ENCODE measurements at regions of chr1 and their contacts with region 1.

Region 1: DNA sequence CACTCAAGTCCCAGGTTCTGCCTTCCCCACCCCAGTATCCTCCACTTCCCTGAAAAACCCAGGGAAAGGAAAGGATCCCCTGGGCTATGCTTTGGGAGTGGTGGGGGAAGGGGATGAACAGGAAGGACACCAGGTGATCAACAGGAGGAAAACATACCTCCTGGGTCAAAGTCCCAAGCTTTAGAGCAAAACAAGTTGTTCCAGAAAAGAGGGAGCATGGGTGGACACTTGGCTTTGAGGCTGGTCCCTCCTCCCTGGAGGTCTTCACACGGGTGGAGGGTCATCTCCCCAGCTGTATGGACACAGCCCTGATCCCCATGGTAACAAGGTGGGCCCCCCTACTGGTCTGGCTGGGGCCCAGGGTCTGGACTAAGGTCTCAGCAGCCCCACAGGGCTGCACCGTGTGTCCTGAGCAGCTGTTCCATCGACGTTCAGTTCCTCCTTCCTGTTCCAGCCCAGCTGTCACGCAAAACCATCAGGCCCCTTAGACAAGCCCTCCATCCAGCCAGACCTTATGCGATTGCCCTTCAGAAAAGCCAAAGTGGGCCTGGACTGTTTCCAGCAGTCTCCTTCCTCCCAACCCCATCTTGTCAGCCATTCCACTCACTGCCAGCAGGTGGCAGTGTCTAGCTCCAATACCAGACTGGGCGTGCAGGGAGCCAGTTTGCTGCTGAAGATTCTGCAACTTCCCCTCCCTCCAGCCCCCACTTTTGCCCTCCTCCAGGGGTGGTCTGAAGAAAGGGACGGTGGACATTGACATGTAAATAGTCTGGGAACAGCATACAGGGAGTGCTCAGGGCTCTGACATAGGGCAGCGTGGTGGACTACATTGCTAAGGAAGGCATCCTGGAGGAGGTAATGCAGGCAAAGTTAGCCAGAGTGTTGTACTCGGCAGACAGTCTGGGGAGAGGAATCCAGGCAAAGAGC is 2.9 kb upstream of the PDZK1IP1 start:
- DNase-seq: peak; percentile 33 to 77 (median 56)
- ATAC-seq: peak; percentile 67
- H3K4me3 ChIP-seq: no peak overlapping the region
- H3K4me3 Mint-ChIP-seq: no peak overlapping the region
- H3K27ac ChIP-seq: no peak overlapping the region
- H3K27ac Mint-ChIP-seq: no peak overlapping the region
- H3K4me1 ChIP-seq: no peaks in the 10 kb centered on the region
- H3K4me1 Mint-ChIP-seq: no peaks in the 10 kb centered on the region
- H3K27me3 ChIP-seq: peaks cover under 1 to 3% of the 10 kb centered on the region in 2 experiments
- H3K27me3 Mint-ChIP-seq: peaks cover 18% of the 10 kb centered on the region
- CTCF ChIP-seq: peak; percentile 91

Region 2: DNA sequence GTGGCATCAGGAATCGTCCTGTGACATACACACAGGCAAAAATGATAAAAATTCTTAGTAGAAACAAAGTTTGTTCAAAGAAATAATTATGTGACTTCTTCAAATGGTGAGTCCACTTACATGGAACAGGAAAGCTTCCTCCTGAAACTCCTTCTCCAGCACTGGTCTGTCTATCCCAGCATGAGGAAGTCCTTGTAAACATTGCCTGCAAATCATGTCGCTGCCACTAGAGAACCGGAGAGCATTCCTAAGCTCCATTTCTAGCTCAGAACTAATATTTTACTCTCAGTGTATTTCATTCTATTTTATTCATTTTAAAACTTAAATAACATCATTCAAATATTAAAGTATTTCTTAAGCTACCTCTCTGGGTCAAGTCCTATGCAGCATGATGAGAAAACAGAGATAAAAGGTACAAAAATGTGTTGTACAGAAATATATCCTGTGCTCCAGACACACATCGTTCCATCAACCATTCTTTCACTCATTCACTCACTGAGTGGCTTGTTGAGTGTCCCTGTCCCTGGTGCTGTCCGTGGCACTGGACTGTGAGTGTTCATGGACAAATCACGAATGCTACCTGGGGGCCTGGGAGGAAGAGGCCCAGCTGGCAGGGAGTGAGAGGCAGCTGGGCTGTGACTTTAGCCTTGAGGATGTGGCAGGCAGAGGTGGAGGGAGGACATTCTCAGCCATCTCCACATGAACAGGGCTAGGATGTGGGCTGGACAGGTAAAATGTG is 45.5 kb before region 1 on chr1:
- CTCF ChIA-PET with region 1: no interaction called
- POLR2A ChIA-PET with region 1: no interaction called
- intact Hi-C with region 1: no loop called
- DNase-seq: no peak
- ATAC-seq: no peak
- H3K4me3 ChIP-seq: no peak overlapping the region
- H3K4me3 Mint-ChIP-seq: no peak overlapping the region
- H3K27ac ChIP-seq: no peak overlapping the region
- H3K27ac Mint-ChIP-seq: no peak overlapping the region
- H3K4me1 ChIP-seq: no peaks in the 10 kb centered on the region
- H3K4me1 Mint-ChIP-seq: no peaks in the 10 kb centered on the region
- H3K27me3 ChIP-seq: peaks cover 1 to 4% of the 10 kb centered on the region in 2 experiments
- H3K27me3 Mint-ChIP-seq: peaks cover 41% of the 10 kb centered on the region
- CTCF ChIP-seq: no peak

Region 3: DNA sequence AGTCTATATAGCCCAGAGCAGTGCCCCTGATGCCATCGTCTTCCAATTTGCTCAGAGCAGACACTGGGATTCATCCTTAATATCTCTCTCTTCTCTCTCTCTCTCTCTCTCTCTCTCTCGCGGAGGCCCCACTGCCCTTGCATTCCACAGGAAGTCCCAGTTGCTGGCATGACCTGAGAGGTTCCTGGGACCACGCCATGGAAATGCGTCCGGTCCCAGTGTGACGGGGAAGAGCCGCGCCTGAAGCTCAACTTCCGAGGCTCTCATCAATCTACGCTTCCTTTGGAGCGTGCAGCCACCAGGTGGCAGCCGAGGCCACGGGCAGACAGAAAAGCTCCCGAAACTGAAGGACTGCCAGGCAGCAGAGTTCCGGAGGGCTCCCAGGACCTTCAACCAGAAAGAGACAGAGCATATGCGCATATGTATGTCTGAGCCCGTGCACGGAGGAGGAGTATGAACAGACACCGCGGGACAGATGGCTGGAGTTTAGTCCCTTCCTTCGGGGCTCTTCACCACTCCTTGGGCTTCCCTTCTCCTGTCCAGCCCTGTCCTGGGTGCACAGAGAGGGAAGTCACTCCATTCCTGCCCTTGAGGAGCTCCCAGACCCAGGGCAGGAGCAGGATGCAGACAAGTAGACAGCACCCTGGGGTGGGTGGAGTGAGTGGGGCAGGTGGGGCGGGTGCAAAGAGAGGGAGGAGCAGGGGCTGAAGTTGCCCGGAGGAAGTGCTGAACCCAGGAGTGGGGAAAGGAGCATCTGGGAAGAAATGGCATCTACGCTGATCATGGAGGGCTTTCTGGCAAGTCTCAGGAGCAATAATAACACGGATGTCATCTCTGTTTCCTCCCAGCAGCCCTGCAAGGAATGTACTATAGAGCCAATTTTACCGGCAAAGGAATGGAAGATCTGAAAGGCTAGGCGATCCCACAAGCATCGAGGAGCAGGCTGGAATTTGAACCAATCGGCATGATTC is 13.4 kb before region 1 on chr1:
- CTCF ChIA-PET with region 1: interaction called, 17 read pairs
- POLR2A ChIA-PET with region 1: no interaction called
- intact Hi-C with region 1: no loop called
- DNase-seq: peak; percentile 40 to 79 (median 58)
- ATAC-seq: peak; percentile 63
- H3K4me3 ChIP-seq: peak overlapping the region; percentile 47
- H3K4me3 Mint-ChIP-seq: peak overlapping the region; percentile 78
- H3K27ac ChIP-seq: no peak overlapping the region
- H3K27ac Mint-ChIP-seq: no peak overlapping the region
- H3K4me1 ChIP-seq: peaks cover 11% of the 10 kb centered on the region
- H3K4me1 Mint-ChIP-seq: peaks cover 15% of the 10 kb centered on the region
- H3K27me3 ChIP-seq: peaks cover 16 to 22% of the 10 kb centered on the region in 2 experiments
- H3K27me3 Mint-ChIP-seq: peaks cover 69% of the 10 kb centered on the region
- CTCF ChIP-seq: peak; percentile 73

Region 4: GRCh38 chr1:47262787-47263413 is 70.2 kb after region 1 on chr1:
- CTCF ChIA-PET with region 1: interaction called, 10 read pairs
- POLR2A ChIA-PET with region 1: interaction called, 3 read pairs
- intact Hi-C with region 1: loop called (anchors 2 to 5 kb)
- DNase-seq: peak in 10 of 14 experiments; percentile 5 to 57 (median 18)
- ATAC-seq: peak; percentile 39
- H3K4me3 ChIP-seq: no peak overlapping the region
- H3K4me3 Mint-ChIP-seq: no peak overlapping the region
- H3K27ac ChIP-seq: no peak overlapping the region
- H3K27ac Mint-ChIP-seq: no peak overlapping the region
- H3K4me1 ChIP-seq: no peaks in the 10 kb centered on the region
- H3K4me1 Mint-ChIP-seq: no peaks in the 10 kb centered on the region
- H3K27me3 ChIP-seq: no peaks in the 10 kb centered on the region
- H3K27me3 Mint-ChIP-seq: no peaks in the 10 kb centered on the region
- CTCF ChIP-seq: peak; percentile 68

Region 5: DNA sequence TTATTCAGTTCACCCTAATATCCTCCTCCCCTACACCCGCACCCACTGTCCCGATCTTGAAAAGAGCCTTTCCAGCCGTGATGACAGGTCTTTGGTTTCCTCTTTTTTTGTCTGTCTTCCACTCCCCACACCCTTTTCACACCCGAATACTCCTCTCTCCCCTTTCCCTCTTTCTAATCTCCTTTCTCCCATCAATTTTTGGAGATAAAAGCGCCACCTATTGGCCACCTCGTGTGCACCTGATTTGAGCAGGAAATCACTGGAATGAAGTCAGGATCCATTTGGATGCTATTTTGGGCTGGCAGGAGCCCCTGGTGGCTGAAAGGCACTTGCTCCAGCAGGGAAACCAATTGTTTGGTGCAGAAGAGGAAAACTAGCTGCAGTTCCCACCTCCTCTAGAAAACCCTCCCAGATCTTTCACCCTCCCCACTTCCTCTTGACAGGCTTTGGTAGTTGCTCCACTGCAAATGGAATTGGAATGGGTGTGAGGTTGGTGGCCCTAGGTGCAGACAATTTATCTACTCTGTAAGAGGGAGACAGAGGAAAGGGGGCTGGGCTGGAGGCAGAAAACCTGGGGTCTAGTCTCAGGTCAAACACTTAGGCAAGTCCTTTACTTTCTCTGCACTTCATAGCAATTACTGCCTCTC is 231.7 kb after region 1 on chr1:
- CTCF ChIA-PET with region 1: no interaction called
- POLR2A ChIA-PET with region 1: no interaction called
- intact Hi-C with region 1: loop called in 1 of 2 experiments (anchors 1 kb)
- DNase-seq: peak in 2 of 14 experiments; percentile 18 to 20
- ATAC-seq: no peak
- H3K4me3 ChIP-seq: no peak overlapping the region
- H3K4me3 Mint-ChIP-seq: no peak overlapping the region
- H3K27ac ChIP-seq: no peak overlapping the region
- H3K27ac Mint-ChIP-seq: no peak overlapping the region
- H3K4me1 ChIP-seq: no peaks in the 10 kb centered on the region
- H3K4me1 Mint-ChIP-seq: no peaks in the 10 kb centered on the region
- H3K27me3 ChIP-seq: peaks cover 0 to 12% of the 10 kb centered on the region in 2 experiments
- H3K27me3 Mint-ChIP-seq: peaks cover 69% of the 10 kb centered on the region
- CTCF ChIP-seq: peak; percentile 63

Region 6: GRCh38 chr1:47710329-47711071 is 517.8 kb after region 1 on chr1:
- CTCF ChIA-PET with region 1: interaction called, 4 read pairs
- POLR2A ChIA-PET with region 1: no interaction called
- intact Hi-C with region 1: loop called (anchors 1 to 2 kb)
- DNase-seq: peak; percentile 26 to 76 (median 56)
- ATAC-seq: peak; percentile 65
- H3K4me3 ChIP-seq: no peak overlapping the region
- H3K4me3 Mint-ChIP-seq: no peak overlapping the region
- H3K27ac ChIP-seq: no peak overlapping the region
- H3K27ac Mint-ChIP-seq: no peak overlapping the region
- H3K4me1 ChIP-seq: peaks cover 25% of the 10 kb centered on the region
- H3K4me1 Mint-ChIP-seq: peaks cover 8% of the 10 kb centered on the region
- H3K27me3 ChIP-seq: peaks cover 65 to 85% of the 10 kb centered on the region in 2 experiments
- H3K27me3 Mint-ChIP-seq: peaks cover 89% of the 10 kb centered on the region
- CTCF ChIP-seq: peak; percentile 90

Region 7: GRCh38 chr1:47725992-47726855 is 533.5 kb after region 1 on chr1:
- CTCF ChIA-PET with region 1: interaction called, 3 read pairs
- POLR2A ChIA-PET with region 1: no interaction called
- intact Hi-C with region 1: loop called (anchors 5 kb)
- DNase-seq: peak; percentile 37 to 72 (median 50)
- ATAC-seq: peak; percentile 83
- H3K4me3 ChIP-seq: no peak overlapping the region
- H3K4me3 Mint-ChIP-seq: peak overlapping the region; percentile 54
- H3K27ac ChIP-seq: no peak overlapping the region
- H3K27ac Mint-ChIP-seq: no peak overlapping the region
- H3K4me1 ChIP-seq: peaks cover 7% of the 10 kb centered on the region
- H3K4me1 Mint-ChIP-seq: peaks cover 10% of the 10 kb centered on the region
- H3K27me3 ChIP-seq: peaks cover 20 to 52% of the 10 kb centered on the region in 2 experiments
- H3K27me3 Mint-ChIP-seq: peaks cover 71% of the 10 kb centered on the region
- CTCF ChIP-seq: peak; percentile 70

Measured in CD4-positive, alpha-beta T cell (primary cell).